ENCODE measurements at regions of chr5 and their contacts with region 1.

Region 1: GRCh38 chr5:157253547-157253946 is 12.4 kb upstream of the CYFIP2 start:
- DNase-seq: peak in 1 of 2 experiments; percentile 38
- H3K4me3 ChIP-seq: no peak overlapping the region
- H3K27ac ChIP-seq: no peak overlapping the region
- H3K4me1 ChIP-seq: no peaks in the 10 kb centered on the region
- H3K27me3 ChIP-seq: peaks cover 18% of the 10 kb centered on the region; the same call in 1 of the 2 replicates
- CTCF ChIP-seq: peak; percentile 88

Region 2: GRCh38 chr5:157049605-157050004 is 203.9 kb before region 1 on chr5:
- CTCF ChIA-PET with region 1: interaction called, 11 read pairs
- POLR2A ChIA-PET with region 1: no interaction called
- intact Hi-C with region 1: no loop called
- DNase-seq: no peak
- H3K4me3 ChIP-seq: no peak overlapping the region
- H3K27ac ChIP-seq: peak overlapping the region; percentile 12; the same call in 1 of the 2 replicates
- H3K4me1 ChIP-seq: peaks cover 16% of the 10 kb centered on the region
- H3K27me3 ChIP-seq: no peaks in the 10 kb centered on the region
- CTCF ChIP-seq: no peak

Region 3: DNA sequence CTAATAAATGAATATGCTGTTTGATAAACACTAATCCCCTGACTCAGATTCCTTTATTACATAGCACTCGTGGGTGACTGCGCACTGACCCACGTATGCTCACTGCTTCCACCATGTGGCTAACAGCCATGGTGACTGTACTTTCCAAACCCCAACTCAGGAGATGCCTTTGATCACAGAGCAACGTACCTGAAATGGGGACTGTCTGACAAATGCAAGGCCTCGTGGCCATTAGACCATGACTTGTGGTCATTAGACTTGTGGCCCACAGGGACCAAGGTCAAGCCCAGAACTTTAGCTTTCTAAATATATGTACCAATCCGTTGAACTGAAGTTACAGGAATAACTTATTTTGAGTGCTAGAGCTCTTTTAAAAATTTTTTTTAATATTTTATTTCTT is 58.9 kb after region 1 on chr5:
- CTCF ChIA-PET with region 1: no interaction called
- POLR2A ChIA-PET with region 1: no interaction called
- intact Hi-C with region 1: loop called (anchors 1 kb)
- DNase-seq: no peak
- H3K4me3 ChIP-seq: no peak overlapping the region
- H3K27ac ChIP-seq: no peak overlapping the region
- H3K4me1 ChIP-seq: no peaks in the 10 kb centered on the region
- H3K27me3 ChIP-seq: peaks cover 36% of the 10 kb centered on the region
- CTCF ChIP-seq: peak; percentile 63